PC-9 (cell line): ENCODE measurements at regions of chr3 and their contacts with region 1.

Region 1: GRCh38 chr3:197830308-197830966 is 39.4 kb downstream of the LRCH3 start:
- DNase-seq: no peak
- H3K4me3 ChIP-seq: no peak overlapping the region
- H3K27ac ChIP-seq: no peak overlapping the region
- H3K4me1 ChIP-seq: no peaks in the 10 kb centered on the region
- H3K27me3 ChIP-seq: no peaks in the 10 kb centered on the region
- CTCF ChIP-seq: no peak

Region 2: DNA sequence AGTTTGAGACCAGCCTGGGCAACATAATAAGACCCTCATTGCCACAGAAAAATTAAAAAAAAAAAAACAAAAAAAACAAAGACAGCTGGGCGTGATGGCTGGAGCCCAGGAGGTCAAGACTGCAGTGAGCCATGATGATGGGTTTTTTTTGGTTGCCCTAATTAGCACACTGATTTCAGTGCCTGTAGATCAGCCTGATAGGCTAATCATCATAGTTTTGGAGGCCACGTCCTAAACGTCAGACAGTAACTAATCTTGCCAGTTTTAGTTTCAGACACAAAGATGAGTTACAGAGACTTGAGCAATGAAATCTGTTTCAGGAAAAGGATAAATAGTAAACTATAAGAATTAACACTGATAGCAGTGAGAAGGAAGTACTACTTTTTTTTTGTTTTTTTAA is 16.1 kb after region 1 on chr3:
- CTCF ChIA-PET with region 1: no interaction called
- POLR2A ChIA-PET with region 1: interaction called, 11 read pairs
- intact Hi-C with region 1: no loop called
- DNase-seq: no peak
- H3K4me3 ChIP-seq: no peak overlapping the region
- H3K27ac ChIP-seq: no peak overlapping the region
- H3K4me1 ChIP-seq: no peaks in the 10 kb centered on the region
- H3K27me3 ChIP-seq: no peaks in the 10 kb centered on the region
- CTCF ChIP-seq: no peak

Region 3: DNA sequence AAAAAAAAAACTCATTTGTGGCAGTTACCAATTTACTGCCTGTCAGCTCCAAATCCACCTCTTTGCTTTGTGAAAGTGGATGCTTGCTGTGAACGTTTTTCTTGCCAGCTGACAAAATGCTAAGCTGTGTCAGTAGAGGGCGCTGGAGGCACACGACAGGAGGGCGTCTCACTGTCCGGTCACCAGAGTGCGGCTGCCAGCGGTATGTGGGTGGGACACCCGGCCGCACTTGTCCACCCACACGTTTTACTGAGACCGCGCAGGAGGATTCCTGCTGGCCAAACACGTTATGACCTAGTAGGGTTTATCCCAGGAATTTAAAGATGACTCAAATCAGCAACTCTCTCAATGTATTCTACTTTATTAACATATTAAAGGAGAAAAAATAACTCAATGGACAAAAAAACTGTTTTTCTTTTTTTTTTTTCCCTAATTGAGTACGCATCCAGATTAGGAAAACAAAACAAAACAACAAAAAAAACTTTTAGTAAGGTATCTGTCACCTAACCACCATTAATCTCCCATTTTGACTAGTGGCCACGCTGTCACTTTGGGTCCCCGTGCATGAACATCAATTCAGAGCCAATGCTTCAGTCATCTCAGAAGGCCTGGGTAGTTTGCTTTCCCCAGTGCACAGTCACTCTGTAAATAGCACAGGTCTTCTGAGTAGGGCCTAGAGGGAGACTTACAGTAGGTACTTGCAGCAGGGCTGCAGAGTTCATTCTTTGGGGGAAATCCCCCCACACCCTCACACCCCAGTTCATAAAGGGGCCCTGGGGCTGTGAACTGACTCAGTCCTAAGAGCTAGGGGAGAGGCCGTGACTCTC is 75.8 kb after region 1 on chr3:
- CTCF ChIA-PET with region 1: no interaction called
- POLR2A ChIA-PET with region 1: no interaction called
- intact Hi-C with region 1: no loop called
- DNase-seq: peak; percentile 96 to 97
- H3K4me3 ChIP-seq: no peak overlapping the region; the same call in 1 of the 2 replicates
- H3K27ac ChIP-seq: peak overlapping the region; percentile 64
- H3K4me1 ChIP-seq: peaks cover 18% of the 10 kb centered on the region
- H3K27me3 ChIP-seq: no peaks in the 10 kb centered on the region
- CTCF ChIP-seq: peak; percentile 100